Heart right ventricle (tissue), 16 donors: ENCODE measurements at regions of chr14 and their contacts with region 1.

Region 1: GRCh38 chr14:39276005-39276404 is 42.3 kb downstream of the MIA2 start:
- DNase-seq: no peak
- ATAC-seq: no peak
- H3K4me3 ChIP-seq: no peak overlapping the region
- H3K27ac ChIP-seq: peak overlapping the region in 1 of 10 donors; percentile 15
- H3K4me1 ChIP-seq: peaks cover 0 to 16% (median 0%) of the 10 kb centered on the region in 9 donors
- H3K27me3 ChIP-seq: no peaks in the 10 kb centered on the region
- CTCF ChIP-seq: no peak

Region 2: DNA sequence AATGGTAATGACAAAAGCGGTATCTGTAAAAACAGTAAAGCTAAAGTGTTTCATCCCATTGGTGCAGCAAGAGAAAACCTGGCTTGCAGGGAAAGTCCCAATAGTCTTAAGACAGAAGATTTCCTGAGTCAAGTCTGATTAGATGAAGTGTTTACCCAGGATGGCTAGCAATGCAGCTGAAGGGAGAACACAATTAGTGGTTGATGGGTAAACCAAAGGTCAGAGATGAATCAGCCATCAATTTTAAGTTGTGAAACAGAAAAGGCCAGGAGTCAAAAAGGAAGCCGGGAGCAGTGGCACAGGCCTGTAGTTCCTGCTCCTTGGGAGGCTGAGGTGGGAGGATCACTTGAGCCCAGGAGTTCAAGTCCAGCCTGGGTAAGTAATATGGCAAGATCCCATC is 225.6 kb before region 1 on chr14:
- intact Hi-C with region 1: no loop called
- DNase-seq: no peak
- ATAC-seq: no peak
- H3K4me3 ChIP-seq: no peak overlapping the region
- H3K27ac ChIP-seq: no peak overlapping the region
- H3K4me1 ChIP-seq: peaks cover 0 to 10% (median 0%) of the 10 kb centered on the region in 9 donors
- H3K27me3 ChIP-seq: no peaks in the 10 kb centered on the region
- CTCF ChIP-seq: no peak

Region 3: DNA sequence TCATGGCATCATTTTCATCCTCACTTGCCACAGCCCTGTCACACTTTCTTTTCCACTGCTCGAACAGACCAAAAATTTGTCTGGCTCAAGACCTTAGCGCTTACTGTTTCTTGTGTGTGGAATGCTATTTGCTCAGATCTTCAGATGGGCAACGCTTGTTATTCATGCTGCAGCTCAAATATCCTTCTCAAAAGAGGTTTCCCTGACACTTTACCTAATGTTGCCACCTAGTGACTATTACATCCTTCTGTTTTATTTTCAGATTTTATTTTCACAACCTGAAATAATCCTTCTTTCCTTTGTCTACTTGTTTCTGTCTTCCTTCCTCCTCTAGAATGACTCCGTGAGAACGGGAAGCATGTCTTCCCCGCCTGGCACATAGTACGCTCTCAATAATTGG is 150.6 kb after region 1 on chr14:
- intact Hi-C with region 1: loop called in 1 of 10 experiments (anchors 10 kb)
- DNase-seq: no peak
- ATAC-seq: peak in 1 of 8 donors; percentile 7
- H3K4me3 ChIP-seq: no peak overlapping the region
- H3K27ac ChIP-seq: peak overlapping the region in 1 of 10 donors; percentile 33
- H3K4me1 ChIP-seq: peaks cover 0 to 84% (median 68%) of the 10 kb centered on the region in 9 donors
- H3K27me3 ChIP-seq: no peaks in the 10 kb centered on the region
- CTCF ChIP-seq: peak in 5 of 9 donors; percentile 24 to 49 (median 36)